ENCODE measurements at regions of chr1 and their contacts with region 1.

Region 1: GRCh38 chr1:47725992-47726855 is 271.0 kb downstream of the TRABD2B start:
- DNase-seq: peak; percentile 85
- H3K4me3 Mint-ChIP-seq: peak overlapping the region; percentile 55
- H3K27ac Mint-ChIP-seq: no peak overlapping the region
- H3K4me1 Mint-ChIP-seq: peaks cover 26% of the 10 kb centered on the region
- H3K27me3 Mint-ChIP-seq: peaks cover 42% of the 10 kb centered on the region
- CTCF ChIP-seq: peak; percentile 72

Region 2: GRCh38 chr1:47388891-47389238 is 337.4 kb before region 1 on chr1:
- CTCF ChIA-PET with region 1: interaction called, 37 read pairs
- intact Hi-C with region 1: loop called (anchors 1 kb)
- DNase-seq: peak; percentile 81
- H3K4me3 Mint-ChIP-seq: no peak overlapping the region
- H3K27ac Mint-ChIP-seq: no peak overlapping the region
- H3K4me1 Mint-ChIP-seq: no peaks in the 10 kb centered on the region
- H3K27me3 Mint-ChIP-seq: peaks cover 22% of the 10 kb centered on the region
- CTCF ChIP-seq: peak; percentile 88

Region 3: GRCh38 chr1:47527658-47528255 is 198.5 kb before region 1 on chr1:
- CTCF ChIA-PET with region 1: interaction called, 24 read pairs
- intact Hi-C with region 1: loop called (anchors 1 kb)
- DNase-seq: peak; percentile 79
- H3K4me3 Mint-ChIP-seq: no peak overlapping the region
- H3K27ac Mint-ChIP-seq: no peak overlapping the region
- H3K4me1 Mint-ChIP-seq: peaks cover 15% of the 10 kb centered on the region
- H3K27me3 Mint-ChIP-seq: peaks cover 33% of the 10 kb centered on the region
- CTCF ChIP-seq: peak; percentile 80

Region 4: DNA sequence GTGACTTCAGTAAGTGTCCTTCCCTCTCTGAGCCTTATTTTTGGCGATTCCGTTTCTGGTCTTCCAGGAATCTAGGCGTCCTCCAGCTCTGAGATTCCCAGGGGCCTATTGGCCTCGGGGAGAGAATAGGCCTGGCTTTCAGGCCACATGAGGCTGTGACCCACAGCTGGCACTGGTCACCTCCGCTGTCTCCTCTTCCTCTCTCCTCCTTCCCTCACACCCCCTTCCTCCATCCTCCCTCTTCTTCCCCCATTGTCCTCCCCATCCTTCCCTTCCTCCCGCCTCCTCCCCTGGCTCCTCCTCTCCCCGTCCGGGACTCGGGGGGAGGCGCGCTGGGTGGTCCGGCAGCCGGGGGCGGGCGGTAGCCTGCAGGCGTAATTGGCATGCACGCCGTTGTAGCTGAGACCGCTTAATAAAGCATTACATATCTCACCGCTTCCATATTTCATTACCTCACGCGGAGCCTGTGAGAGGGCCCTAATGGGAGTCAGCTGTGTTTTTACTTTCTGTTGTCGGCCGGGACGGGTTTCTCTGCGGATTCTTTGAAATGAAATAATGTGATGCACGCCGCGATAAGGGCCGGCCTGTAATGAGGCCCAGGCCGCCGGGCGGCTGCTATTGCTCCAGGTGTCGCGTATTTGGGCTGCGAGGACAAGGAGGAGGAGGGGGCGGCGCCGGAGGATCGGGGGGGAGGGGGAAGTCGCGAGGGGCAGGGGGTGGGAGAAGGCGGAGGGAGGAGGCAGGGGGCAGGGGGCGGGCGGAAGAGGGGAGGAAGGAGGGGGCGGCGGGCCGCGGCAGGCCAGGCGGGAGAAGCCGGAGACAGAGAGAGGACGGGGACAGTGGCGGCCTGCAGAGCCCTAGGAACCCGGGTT is 193.1 kb before region 1 on chr1:
- CTCF ChIA-PET with region 1: interaction called, 24 read pairs
- intact Hi-C with region 1: no loop called
- DNase-seq: no peak
- H3K4me3 Mint-ChIP-seq: peak overlapping the region; percentile 21
- H3K27ac Mint-ChIP-seq: no peak overlapping the region
- H3K4me1 Mint-ChIP-seq: peaks cover under 1% of the 10 kb centered on the region
- H3K27me3 Mint-ChIP-seq: peaks cover 34% of the 10 kb centered on the region
- CTCF ChIP-seq: no peak

Region 5: DNA sequence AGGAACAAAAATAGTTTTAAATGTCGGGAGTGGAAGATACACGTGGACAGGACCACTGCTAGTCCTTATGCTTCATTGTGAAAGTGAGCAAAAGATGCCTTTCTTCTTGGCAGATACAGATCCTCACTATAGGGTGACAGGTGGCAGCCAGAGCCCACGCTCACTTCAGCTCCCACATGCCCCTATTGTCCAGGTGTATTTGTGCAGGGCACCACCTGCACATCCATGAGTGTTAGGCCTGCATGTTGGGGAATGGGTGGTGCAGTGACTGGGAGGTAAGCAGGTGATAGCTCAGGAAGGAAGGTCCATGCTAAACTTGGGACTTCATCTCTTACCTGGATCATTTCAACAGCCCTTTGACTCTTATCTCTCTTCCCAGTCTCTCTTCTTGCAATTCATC is 523.6 kb after region 1 on chr1:
- CTCF ChIA-PET with region 1: no interaction called
- intact Hi-C with region 1: no loop called
- DNase-seq: peak; percentile 17
- H3K4me3 Mint-ChIP-seq: no peak overlapping the region
- H3K27ac Mint-ChIP-seq: no peak overlapping the region
- H3K4me1 Mint-ChIP-seq: peaks cover 18% of the 10 kb centered on the region
- H3K27me3 Mint-ChIP-seq: no peaks in the 10 kb centered on the region
- CTCF ChIP-seq: no peak

Measured in Calu3 (cell line).